HEK293T (cell line): ENCODE measurements at regions of chrX and their contacts with region 1.

Region 1: GRCh38 chrX:120485638-120486520 is 16.8 kb upstream of the LAMP2 start:
- DNase-seq: peak; percentile 80

Region 2: GRCh38 chrX:120452131-120452530 is 33.7 kb before region 1 on chrX:
- CTCF ChIA-PET with region 1: interaction called, 11 read pairs
- POLR2A ChIA-PET with region 1: no interaction called
- DNase-seq: peak; percentile 65

Region 3: GRCh38 chrX:120468825-120469525 is 16.9 kb before region 1 on chrX and contains the start of gene LAMP2:
- CTCF ChIA-PET with region 1: no interaction called
- POLR2A ChIA-PET with region 1: interaction called, 10 read pairs
- DNase-seq: peak; percentile 92